ENCODE measurements at regions of chr10 and their contacts with region 1.

Region 1: DNA sequence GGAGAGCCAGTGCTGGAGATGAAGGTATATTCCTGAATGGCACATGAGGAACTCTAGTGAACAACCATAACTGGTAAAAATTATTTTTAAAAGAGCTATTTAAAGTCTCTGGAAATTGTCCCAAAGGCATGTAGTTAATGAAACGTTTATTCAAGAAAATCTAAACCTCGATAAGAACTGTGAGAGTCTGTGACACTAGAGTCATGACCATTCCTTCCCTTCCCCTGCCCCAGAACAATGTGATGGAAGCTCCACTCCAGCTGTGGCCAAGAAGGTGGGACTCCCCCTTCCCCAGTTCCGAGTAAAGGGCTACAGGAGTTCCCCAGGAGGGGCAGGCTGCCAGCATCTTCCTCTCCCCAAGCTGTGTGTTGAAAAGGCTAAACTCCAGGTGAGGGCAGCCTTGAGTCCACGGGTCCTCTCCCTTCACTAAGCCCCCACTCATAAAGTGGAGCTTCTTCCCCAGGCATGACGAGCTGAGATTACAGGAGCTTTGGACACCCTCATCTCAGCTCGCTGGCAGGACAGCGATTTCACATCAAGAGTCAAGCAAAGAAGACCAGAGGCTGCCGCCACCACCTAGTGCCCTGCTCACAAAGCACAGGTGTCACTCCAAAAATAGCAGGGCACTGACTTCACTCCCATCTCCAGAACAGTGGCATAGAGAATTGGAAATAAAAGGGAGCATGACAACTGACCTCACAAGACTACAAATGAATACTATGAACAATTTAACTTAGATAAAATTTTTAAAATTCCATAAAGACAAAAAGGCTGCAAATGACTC is 68.5 kb downstream of the NHLRC2 start:
- DNase-seq: no peak
- ATAC-seq: no peak
- H3K4me3 ChIP-seq: no peak overlapping the region
- H3K4me3 Mint-ChIP-seq: no peak overlapping the region
- H3K27ac ChIP-seq: no peak overlapping the region
- H3K27ac Mint-ChIP-seq: no peak overlapping the region
- H3K4me1 ChIP-seq: no peaks in the 10 kb centered on the region
- H3K4me1 Mint-ChIP-seq: peaks cover 0 to 2% (median 0%) of the 10 kb centered on the region in 7 donors
- H3K27me3 ChIP-seq: no peaks in the 10 kb centered on the region
- H3K27me3 Mint-ChIP-seq: peaks cover 20 to 37% (median 24%) of the 10 kb centered on the region in 5 donors

Region 2: DNA sequence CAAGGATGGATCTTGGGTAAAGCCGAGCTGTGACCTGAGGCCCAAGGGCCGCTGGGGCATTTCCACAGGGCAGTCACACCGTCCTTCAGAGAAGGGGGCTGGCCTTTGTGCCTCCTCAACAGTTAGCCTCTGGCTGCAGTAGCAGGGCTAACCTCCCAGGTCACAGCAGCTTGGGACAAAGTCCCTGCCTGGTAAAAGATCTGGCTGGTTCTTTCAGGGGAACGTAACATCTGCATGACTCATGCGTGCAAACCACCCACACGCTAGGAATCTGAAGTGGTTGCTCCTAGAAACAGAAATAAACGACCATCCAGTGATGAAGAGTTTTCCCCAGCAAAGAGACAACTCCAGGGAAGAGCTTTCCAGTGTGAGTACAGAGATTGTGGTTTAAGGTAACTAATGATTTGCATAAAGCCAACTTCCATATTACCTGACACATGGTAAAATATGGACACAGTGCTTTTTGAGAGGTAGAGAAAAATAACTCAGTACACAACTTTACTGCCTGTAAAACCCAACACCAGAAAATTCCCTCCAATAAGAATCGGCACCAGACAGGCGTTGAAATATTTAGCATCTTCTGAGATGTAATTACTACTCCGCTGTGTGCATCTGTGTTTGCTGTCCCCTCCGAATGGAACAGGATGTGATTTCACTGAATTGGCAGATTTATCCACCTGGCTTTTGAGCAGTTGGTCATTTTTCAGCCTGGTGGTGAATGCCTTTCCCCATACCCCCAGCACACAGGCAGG is 35.8 kb after region 1 on chr10:
- CTCF ChIA-PET with region 1: no interaction called
- POLR2A ChIA-PET with region 1: no interaction called
- intact Hi-C with region 1: no loop called
- DNase-seq: peak in 1 of 9 donors; percentile 36
- ATAC-seq: no peak
- H3K4me3 ChIP-seq: no peak overlapping the region
- H3K4me3 Mint-ChIP-seq: peak overlapping the region in 3 of 10 donors; percentile 9 to 18 (median 12)
- H3K27ac ChIP-seq: no peak overlapping the region
- H3K27ac Mint-ChIP-seq: no peak overlapping the region
- H3K4me1 ChIP-seq: peaks cover 37 to 47% of the 10 kb centered on the region in 2 donors
- H3K4me1 Mint-ChIP-seq: peaks cover 26 to 62% (median 51%) of the 10 kb centered on the region in 7 donors
- H3K27me3 ChIP-seq: no peaks in the 10 kb centered on the region
- H3K27me3 Mint-ChIP-seq: peaks cover 0 to 25% (median 6%) of the 10 kb centered on the region in 5 donors

Region 3: GRCh38 chr10:113982769-113983168 is 59.8 kb after region 1 on chr10:
- CTCF ChIA-PET with region 1: no interaction called
- POLR2A ChIA-PET with region 1: no interaction called
- intact Hi-C with region 1: loop called in 1 of 2 experiments (anchors 5 kb)
- DNase-seq: no peak
- ATAC-seq: no peak
- H3K4me3 ChIP-seq: no peak overlapping the region
- H3K4me3 Mint-ChIP-seq: no peak overlapping the region
- H3K27ac ChIP-seq: no peak overlapping the region
- H3K27ac Mint-ChIP-seq: no peak overlapping the region
- H3K4me1 ChIP-seq: peaks cover 8 to 13% of the 10 kb centered on the region in 2 donors
- H3K4me1 Mint-ChIP-seq: peaks cover 12 to 29% (median 14%) of the 10 kb centered on the region in 7 donors
- H3K27me3 ChIP-seq: no peaks in the 10 kb centered on the region
- H3K27me3 Mint-ChIP-seq: peaks cover 0 to 51% (median 3%) of the 10 kb centered on the region in 5 donors